ENCODE measurements at regions of chr9 and their contacts with region 1.

Region 1: GRCh38 chr9:121538246-121538645 is 38.6 kb upstream of the GGTA1 start:
- DNase-seq: no peak
- ATAC-seq: peak; percentile 55

Region 2: GRCh38 chr9:121474231-121474891 is 63.9 kb before region 1 on chr9:
- intact Hi-C with region 1: no loop called
- DNase-seq: no peak
- ATAC-seq: peak; percentile 83

Region 3: DNA sequence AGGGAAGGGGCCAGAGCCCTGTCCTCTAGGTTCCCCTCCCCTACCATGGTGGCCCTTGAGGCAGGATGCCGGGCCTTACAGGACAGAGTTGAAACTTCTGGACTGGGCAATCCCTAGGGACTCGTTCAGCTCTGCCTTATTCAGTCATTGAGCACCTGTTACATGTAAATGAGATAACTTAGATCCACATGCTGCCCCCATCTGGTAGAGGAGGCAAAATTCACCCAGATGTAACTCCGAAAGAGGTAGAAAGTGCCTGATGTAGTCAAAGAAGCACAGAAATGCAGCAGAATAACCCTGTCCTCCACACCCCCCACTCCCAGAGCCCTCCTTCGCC is 40.1 kb before region 1 on chr9:
- intact Hi-C with region 1: loop called (anchors 2 kb)
- DNase-seq: no peak
- ATAC-seq: peak; percentile 61